ENCODE measurements at regions of chr3 and their contacts with region 1.

Region 1: DNA sequence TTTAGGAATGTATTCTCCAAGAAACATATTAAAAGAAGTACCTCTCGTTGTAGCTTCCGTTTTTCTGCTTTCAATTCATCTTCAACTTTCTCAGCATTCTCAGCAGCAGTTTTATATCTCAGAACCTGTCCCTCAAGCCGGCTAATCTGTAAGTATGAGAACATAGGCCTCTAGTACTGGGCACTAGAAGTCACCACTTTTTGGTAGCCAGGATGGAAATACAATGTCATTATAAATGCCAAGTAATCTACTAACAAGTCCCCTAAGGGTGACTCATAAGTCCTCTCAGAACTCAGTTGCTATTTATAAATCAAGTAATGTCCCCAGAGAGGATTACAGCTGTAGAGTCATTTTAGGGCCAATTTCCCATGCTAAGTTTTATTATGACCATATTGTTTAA is 61.1 kb downstream of the MLH1 start:
- DNase-seq: no peak
- H3K4me3 ChIP-seq: peak overlapping the region in 1 of 2 donors; percentile 18
- H3K27ac ChIP-seq: peak overlapping the region; percentile 90 to 92
- H3K4me1 ChIP-seq: peaks cover 13 to 58% of the 10 kb centered on the region in 2 donors
- H3K27me3 ChIP-seq: no peaks in the 10 kb centered on the region
- CTCF ChIP-seq: no peak

Region 2: DNA sequence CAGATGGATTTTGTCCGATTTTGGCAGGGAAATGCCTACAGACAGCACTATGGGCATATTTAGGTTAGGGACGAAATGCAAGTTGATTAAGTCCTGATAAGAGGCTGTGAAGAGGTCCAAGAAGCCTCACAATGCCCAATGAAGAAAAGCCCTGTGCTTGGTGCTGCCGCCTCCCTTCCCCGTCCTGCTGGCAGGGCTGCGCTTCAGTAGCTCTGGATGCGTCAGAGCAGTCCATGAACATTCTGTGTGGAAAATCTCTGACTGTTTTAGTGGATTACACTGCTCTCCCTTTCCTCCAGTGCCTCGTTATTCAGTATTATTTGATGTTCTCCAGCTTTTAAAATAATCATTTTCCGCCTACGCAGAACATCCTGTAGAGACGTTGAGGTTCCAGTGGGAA is 21.4 kb before region 1 on chr3:
- intact Hi-C with region 1: loop called (anchors 2 kb)
- DNase-seq: no peak
- H3K4me3 ChIP-seq: peak overlapping the region in 1 of 2 donors; percentile 36
- H3K27ac ChIP-seq: peak overlapping the region; percentile 56 to 64
- H3K4me1 ChIP-seq: peaks cover 9 to 27% of the 10 kb centered on the region in 2 donors
- H3K27me3 ChIP-seq: no peaks in the 10 kb centered on the region
- CTCF ChIP-seq: no peak

Region 3: GRCh38 chr3:37072892-37073291 is 18.5 kb after region 1 on chr3:
- intact Hi-C with region 1: loop called (anchors 2 kb)
- DNase-seq: no peak
- H3K4me3 ChIP-seq: peak overlapping the region in 1 of 2 donors; percentile 12
- H3K27ac ChIP-seq: peak overlapping the region; percentile 81 to 85
- H3K4me1 ChIP-seq: peaks cover 3 to 46% of the 10 kb centered on the region in 2 donors
- H3K27me3 ChIP-seq: no peaks in the 10 kb centered on the region
- CTCF ChIP-seq: no peak

Region 4: DNA sequence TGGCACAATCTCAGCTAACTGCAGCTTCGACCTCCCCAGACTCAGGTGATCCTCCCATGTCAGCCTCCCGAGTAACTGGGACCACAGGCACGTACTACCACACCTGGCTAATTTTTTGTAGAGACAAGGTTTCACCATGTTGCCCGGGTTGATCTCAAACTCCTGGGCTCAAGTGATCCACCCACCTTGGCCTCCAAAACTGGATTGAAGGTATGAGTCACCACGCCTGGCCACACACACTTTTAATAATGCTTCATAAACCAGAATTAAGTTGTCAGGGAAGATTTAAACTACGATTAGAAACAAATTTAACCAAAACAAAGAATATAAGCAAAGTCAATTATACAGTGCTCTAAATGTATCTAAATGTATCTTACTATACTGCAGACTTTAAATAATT is 32.5 kb after region 1 on chr3:
- intact Hi-C with region 1: no loop called
- DNase-seq: no peak
- H3K4me3 ChIP-seq: no peak overlapping the region
- H3K27ac ChIP-seq: no peak overlapping the region
- H3K4me1 ChIP-seq: no peaks in the 10 kb centered on the region
- H3K27me3 ChIP-seq: no peaks in the 10 kb centered on the region
- CTCF ChIP-seq: no peak

Region 5: GRCh38 chr3:37114251-37115145 is 60.1 kb after region 1 on chr3:
- intact Hi-C with region 1: loop called (anchors 5 kb)
- DNase-seq: no peak
- H3K4me3 ChIP-seq: no peak overlapping the region
- H3K27ac ChIP-seq: peak overlapping the region; percentile 80 to 82
- H3K4me1 ChIP-seq: peaks cover 3 to 33% of the 10 kb centered on the region in 2 donors
- H3K27me3 ChIP-seq: no peaks in the 10 kb centered on the region
- CTCF ChIP-seq: no peak